ENCODE measurements at regions of chr4 and their contacts with region 1.

Region 1: DNA sequence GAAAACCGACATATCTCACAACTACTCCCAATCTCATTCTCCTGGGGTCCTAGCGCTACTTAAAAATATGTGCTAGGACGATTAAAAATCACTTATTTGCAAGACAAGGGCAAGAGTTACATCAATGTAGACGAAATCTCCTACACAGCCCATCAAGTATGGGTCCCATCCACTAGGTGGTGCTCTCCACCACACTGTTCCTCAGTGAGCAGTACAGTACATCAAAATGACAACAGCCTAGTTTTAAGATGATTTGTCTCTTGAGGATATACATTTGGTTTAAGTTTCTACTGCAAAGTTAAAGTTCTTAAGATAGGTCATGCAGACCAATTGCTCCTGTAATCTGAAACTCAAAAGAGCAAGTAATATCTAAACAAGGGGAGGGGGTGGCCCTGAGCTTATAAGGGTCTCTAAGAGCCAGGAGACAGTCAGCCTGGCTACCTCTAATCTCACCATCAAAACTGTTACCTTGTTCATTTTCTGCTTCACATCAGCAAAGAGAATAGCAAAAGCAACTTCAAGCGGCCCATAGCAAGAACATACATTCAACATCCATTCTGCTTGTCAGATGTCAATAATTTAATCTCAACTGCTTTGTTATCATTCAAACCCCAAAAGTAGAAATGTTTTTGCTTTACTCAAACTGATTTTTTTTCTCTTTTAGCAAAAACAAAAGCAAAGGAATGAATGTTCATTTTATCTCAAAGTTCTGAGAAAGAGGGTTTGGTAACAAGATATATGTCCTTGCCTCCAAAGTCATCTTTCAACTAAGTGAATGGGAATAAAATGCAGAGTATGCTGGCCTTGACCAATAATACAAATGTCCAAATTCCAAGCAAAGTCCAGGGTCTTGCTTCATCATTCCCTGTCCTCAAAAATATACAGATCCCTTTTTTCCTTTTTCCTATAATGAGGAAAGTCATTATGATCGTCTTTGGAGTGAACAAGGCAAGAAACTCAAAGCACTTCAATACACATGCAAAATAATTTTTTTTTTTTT is 53.1 kb downstream of the STX18 start:
- DNase-seq: peak; percentile 88
- H3K4me3 Mint-ChIP-seq: no peak overlapping the region
- H3K27ac Mint-ChIP-seq: no peak overlapping the region
- H3K4me1 Mint-ChIP-seq: peaks cover 8% of the 10 kb centered on the region
- H3K27me3 Mint-ChIP-seq: no peaks in the 10 kb centered on the region

Region 2: DNA sequence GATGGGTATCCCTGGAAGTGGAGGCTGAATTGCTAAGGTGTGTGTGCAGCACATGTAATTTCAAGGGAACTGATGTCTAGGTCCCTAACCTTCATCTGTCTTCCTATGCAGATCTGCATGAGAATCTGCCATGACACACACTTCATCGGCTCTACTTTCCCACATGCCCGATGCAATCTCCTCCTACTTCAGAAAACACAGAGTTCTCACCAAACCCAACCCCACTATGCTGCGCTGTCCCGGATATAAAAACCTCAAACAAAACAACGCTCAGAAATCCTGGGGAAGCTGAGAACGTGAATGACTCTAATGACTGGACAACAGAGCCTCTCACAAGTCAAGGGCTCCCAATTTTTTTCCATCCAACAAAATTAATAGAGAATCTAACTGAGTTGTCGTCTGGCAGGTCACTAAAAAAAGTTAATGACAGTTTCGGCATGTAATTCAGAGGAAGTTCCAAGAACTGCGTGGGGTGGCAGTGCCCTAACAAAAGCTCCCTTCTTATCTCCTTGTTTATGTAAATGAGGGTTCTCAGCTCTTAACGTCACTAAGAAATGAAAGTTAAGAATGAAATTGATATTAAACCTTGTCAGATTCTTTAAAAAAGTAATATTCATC is 14.1 kb after region 1 on chr4:
- CTCF ChIA-PET with region 1: interaction called, 5 read pairs
- intact Hi-C with region 1: loop called (anchors 1 kb)
- DNase-seq: peak; percentile 37
- H3K4me3 Mint-ChIP-seq: peak overlapping the region; percentile 44
- H3K27ac Mint-ChIP-seq: peak overlapping the region; percentile 5
- H3K4me1 Mint-ChIP-seq: peaks cover 9% of the 10 kb centered on the region
- H3K27me3 Mint-ChIP-seq: no peaks in the 10 kb centered on the region

Region 3: DNA sequence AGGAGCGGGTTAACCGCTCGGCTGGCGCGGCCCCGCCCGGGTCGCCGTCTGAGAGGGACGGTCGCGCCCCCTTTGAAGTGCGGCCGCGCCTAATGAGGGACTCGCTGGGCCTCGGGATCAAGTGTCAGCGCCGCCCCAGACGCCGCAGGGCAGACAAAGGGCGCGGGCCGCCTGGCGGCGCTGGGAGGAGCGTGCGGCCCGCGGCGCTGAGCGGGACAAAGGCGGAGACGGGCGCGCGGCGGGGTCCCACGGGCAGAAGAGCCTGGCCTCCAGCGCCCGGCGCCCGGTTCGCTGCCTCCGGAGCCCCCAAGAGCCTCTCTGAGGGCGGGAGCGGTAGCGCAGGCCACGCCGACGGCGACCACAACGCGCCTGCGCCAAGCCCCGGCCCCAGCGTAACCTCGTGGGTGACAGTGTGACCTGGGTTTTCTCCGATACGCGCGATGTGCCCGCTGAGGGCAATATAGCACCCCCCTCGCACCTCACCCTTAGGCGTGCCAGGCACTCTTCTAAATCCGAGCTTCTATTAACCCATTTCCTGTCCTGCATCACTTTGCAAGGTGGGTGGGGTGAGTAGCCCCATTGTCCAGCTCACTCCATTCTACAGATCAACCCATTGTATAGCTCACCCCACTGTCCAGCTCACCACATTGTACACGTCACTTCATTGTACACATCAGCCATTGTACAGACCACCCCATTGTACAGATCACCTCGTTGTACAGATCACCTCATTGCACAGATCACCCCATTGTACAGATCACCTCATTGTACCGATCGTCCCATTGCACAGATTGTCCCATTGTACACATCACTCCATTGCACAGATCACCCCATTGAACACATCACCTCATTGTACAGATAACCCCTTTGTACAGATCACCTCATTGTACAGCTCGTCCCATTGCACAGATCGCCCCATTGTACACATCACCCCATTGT is 86.8 kb after region 1 on chr4:
- CTCF ChIA-PET with region 1: interaction called, 6 read pairs
- intact Hi-C with region 1: loop called (anchors 1 kb)
- DNase-seq: peak; percentile 49
- H3K4me3 Mint-ChIP-seq: peak overlapping the region; percentile 59
- H3K27ac Mint-ChIP-seq: no peak overlapping the region
- H3K4me1 Mint-ChIP-seq: peaks cover 10% of the 10 kb centered on the region
- H3K27me3 Mint-ChIP-seq: no peaks in the 10 kb centered on the region

Region 4: GRCh38 chr4:4762909-4763821 is 274.5 kb after region 1 on chr4:
- CTCF ChIA-PET with region 1: no interaction called
- intact Hi-C with region 1: loop called (anchors 1 kb)
- DNase-seq: peak; percentile 66
- H3K4me3 Mint-ChIP-seq: no peak overlapping the region
- H3K27ac Mint-ChIP-seq: no peak overlapping the region
- H3K4me1 Mint-ChIP-seq: peaks cover 9% of the 10 kb centered on the region
- H3K27me3 Mint-ChIP-seq: peaks cover 7% of the 10 kb centered on the region

Region 5: DNA sequence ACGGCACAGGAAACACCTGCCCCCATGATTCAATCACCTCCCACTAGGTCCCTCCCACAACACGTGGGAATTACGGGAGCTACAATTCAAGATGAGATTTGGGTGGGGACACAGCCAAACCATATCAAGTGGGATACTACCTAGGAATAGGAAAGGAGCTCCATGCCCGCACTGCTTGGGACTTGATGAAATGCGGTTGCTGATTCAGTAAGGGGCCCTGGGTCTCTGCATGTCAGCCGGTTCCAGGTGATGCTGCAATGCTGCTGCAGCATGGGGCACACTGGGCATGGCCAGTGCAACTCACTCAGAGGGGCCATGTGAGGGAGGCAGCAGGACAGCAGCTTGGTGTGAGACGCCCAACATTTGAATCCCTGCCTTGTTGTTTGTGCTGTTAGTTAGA is 336.7 kb after region 1 on chr4:
- CTCF ChIA-PET with region 1: no interaction called
- intact Hi-C with region 1: no loop called
- DNase-seq: no peak
- H3K4me3 Mint-ChIP-seq: no peak overlapping the region
- H3K27ac Mint-ChIP-seq: no peak overlapping the region
- H3K4me1 Mint-ChIP-seq: no peaks in the 10 kb centered on the region
- H3K27me3 Mint-ChIP-seq: peaks cover 8% of the 10 kb centered on the region

Region 6: GRCh38 chr4:4995103-4995907 is 506.6 kb after region 1 on chr4:
- CTCF ChIA-PET with region 1: no interaction called
- intact Hi-C with region 1: loop called (anchors 10 kb)
- DNase-seq: peak; percentile 62
- H3K4me3 Mint-ChIP-seq: no peak overlapping the region
- H3K27ac Mint-ChIP-seq: no peak overlapping the region
- H3K4me1 Mint-ChIP-seq: no peaks in the 10 kb centered on the region
- H3K27me3 Mint-ChIP-seq: peaks cover 16% of the 10 kb centered on the region

Region 7: DNA sequence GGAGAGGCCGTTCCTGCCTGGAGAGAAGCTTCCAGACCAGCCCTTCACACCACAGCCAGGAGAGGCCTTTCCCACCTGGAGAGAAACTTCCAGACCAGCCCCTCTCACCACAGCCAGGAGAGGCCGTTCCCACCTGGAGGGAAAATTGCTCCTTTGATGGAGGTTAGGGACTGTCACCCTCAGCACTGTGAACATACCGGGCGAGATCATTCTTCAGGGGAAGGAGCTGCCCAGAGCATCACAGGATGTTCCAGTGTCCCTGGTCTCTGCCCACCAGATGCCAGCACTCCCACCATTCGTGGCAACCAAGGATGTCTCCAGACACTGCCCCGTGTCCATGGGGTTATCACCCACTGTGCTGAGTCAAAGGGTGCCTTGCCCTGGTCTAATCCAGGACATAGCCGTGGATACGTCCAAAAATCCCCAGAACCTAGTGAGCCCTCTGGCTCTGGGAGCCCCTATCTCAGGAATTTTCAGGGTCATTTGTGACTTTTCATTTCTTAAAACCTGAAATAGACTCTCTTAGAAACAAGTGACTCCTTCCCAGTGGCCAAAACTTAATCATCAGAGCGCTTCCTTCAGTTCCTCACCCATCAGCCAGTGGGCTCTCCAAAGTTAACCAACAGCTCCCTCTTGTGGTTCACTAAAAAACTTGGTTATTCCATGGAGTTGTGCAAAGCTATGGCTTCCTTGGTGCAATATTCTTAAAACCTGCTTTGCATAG is 1324.0 kb after region 1 on chr4:
- CTCF ChIA-PET with region 1: interaction called, 4 read pairs
- intact Hi-C with region 1: loop called (anchors 2 kb)
- DNase-seq: peak; percentile 31
- H3K4me3 Mint-ChIP-seq: no peak overlapping the region
- H3K27ac Mint-ChIP-seq: no peak overlapping the region
- H3K4me1 Mint-ChIP-seq: no peaks in the 10 kb centered on the region
- H3K27me3 Mint-ChIP-seq: no peaks in the 10 kb centered on the region

Measured in activated naive CD4-positive, alpha-beta T cell treated with anti-CD3 and anti-CD28 coated beads for 36 hours (primary cell).